Tibial artery (tissue), 4 donors: ENCODE measurements at regions of chr11 and their contacts with region 1.

Region 1: DNA sequence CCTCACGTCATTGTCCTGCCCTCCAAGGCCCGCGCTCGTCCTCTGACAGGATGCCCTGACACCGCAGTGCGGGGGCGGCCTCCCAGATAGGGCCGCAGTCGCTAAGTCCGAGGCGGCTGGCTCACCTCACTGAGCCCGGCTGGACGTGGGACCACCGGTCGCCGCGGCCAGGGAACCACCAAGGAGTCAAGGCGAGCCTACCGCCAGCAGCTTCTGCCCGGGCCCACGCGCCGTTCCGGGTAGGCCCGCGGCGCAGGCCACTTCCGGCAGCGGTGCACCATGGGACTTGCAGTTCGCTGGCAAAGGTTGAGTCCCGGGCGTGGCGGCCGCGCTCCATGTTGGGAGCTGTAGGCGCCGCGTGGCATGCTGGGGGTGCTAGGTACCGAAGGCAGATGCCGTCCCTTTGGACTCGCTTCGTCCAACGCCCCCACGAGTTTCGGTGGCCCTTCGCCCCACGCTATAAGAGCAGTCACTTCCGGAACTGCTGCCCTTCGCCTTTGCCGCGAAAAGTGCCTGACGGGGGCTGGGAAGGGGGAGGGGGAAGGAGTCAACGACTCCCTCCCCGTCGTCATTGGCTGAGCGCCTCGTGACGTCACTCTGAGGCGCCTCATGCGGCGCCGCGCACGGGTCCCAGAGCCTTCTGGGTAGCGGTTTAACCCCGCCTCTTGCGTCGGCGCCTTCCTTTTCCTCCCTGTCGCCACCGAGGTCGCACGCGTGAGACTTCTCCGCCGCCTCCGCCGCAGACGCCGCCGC is at the start of gene RPLP2:
- DNase-seq: peak; percentile 98
- H3K4me3 ChIP-seq: peak within 1 kb of the TSS; percentile 86 to 90
- H3K27ac ChIP-seq: peak within 1 kb of the TSS; percentile 94 to 98
- H3K4me1 ChIP-seq: peaks cover 0 to 45% (median 34%) of the 10 kb centered on the region in 4 donors
- H3K27me3 ChIP-seq: no peaks in the 10 kb centered on the region
- CTCF ChIP-seq: peak in 1 of 2 experiments; percentile 3

Region 2: GRCh38 chr11:575996-576768 is 233.3 kb before region 1 on chr11 and contains the start of gene PHRF1:
- intact Hi-C with region 1: loop called (anchors 10 kb)
- DNase-seq: peak; percentile 95 to 98
- H3K4me3 ChIP-seq: peak within 1 kb of the TSS; percentile 78 to 89
- H3K27ac ChIP-seq: peak within 1 kb of the TSS; percentile 83 to 87
- H3K4me1 ChIP-seq: peaks cover 0 to 50% (median 42%) of the 10 kb centered on the region in 4 donors
- H3K27me3 ChIP-seq: no peaks in the 10 kb centered on the region
- CTCF ChIP-seq: peak in 1 of 2 experiments; percentile 31

Region 3: DNA sequence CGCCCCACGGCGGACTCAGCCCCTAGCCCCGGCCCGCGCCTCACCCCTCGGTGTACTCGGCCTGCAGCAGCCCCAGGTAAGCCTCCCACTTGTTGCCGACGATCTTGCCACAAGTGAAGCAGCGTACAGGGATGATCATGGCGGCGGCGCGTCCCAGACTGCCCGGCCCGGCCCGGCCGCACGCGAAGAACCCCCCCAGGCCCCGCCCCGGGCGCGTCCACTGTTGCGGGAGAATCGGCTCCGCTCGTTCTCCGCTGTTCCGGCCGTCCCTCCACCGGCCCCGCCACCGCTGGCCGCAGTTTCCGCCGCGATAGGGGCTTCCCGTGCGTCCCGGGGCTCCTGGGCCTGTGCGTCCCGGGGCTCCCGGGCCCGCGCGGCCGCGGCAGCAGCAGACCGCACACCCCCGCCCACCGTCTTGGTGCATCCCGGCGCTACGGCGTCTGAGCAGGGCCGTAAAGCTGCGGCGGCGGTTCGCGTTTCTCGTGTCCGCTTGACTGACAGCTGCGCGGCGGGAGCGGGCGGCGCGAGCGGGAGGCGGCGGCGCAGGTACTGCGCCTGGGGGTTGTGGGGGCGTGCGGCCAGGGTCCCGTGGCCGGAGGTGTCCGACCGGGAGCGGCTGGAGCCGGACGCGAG is 33.0 kb after region 1 on chr11 and contains the starts of genes POLR2L and TSPAN4:
- intact Hi-C with region 1: loop called (anchors 5 kb)
- DNase-seq: peak; percentile 84 to 93
- H3K4me3 ChIP-seq: peak within 1 kb of the TSS; percentile 98
- H3K27ac ChIP-seq: peak within 1 kb of the TSS; percentile 88 to 95
- H3K4me1 ChIP-seq: peaks cover 4 to 77% (median 61%) of the 10 kb centered on the region in 4 donors
- H3K27me3 ChIP-seq: peaks cover 0 to 4% of the 10 kb centered on the region in 2 donors
- CTCF ChIP-seq: peak in 1 of 2 experiments; percentile 18